Panc1 (cell line): ENCODE measurements at regions of chr18 and their contacts with region 1.

Region 1: DNA sequence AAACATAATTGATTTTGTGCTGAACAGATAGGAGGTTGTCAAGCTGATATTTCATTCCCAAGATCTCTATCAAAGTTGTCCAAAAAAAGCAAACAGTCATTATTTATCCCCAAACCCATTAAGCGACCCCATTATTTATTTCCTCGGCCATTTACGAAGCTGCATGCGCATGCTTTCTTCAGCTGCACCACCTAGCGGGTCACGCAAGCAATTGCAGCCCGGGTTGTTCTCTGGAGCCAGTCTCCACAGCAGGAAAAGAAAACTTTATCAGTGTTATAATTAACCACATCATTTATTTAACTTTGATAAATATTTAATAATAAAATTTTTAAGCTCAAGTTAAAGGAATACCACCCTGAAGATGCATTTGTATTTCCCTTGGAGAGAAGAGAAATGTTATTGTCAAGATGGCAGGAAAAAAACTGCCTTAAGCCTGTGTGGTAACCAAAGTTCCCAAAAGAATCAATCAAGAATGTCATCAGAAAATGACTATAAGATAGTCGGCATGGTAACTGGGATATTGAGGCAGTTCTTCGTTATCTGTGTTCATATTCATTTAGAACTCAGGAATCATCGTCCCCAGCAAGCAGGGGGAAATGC is 304.7 kb downstream of the FBXO15 start:
- DNase-seq: peak; percentile 22
- ATAC-seq: peak; percentile 72
- H3K4me3 ChIP-seq: no peak overlapping the region
- H3K27ac ChIP-seq: no peak overlapping the region
- H3K4me1 ChIP-seq: no peaks in the 10 kb centered on the region
- H3K27me3 ChIP-seq: peaks cover 12% of the 10 kb centered on the region
- CTCF ChIP-seq: peak; percentile 100

Region 2: GRCh38 chr18:72768681-72769229 is 1074.1 kb before region 1 on chr18:
- CTCF ChIA-PET with region 1: no interaction called
- POLR2A ChIA-PET with region 1: no interaction called
- in situ Hi-C with region 1: no loop called
- intact Hi-C with region 1: loop called (anchors 5 kb)
- DNase-seq: no peak
- ATAC-seq: no peak
- H3K4me3 ChIP-seq: no peak overlapping the region
- H3K27ac ChIP-seq: no peak overlapping the region
- H3K4me1 ChIP-seq: no peaks in the 10 kb centered on the region
- H3K27me3 ChIP-seq: no peaks in the 10 kb centered on the region
- CTCF ChIP-seq: no peak

Region 3: GRCh38 chr18:73316513-73316912 is 526.4 kb before region 1 on chr18:
- CTCF ChIA-PET with region 1: no interaction called
- POLR2A ChIA-PET with region 1: no interaction called
- in situ Hi-C with region 1: no loop called
- intact Hi-C with region 1: no loop called
- DNase-seq: no peak
- ATAC-seq: no peak
- H3K4me3 ChIP-seq: no peak overlapping the region
- H3K27ac ChIP-seq: no peak overlapping the region
- H3K4me1 ChIP-seq: no peaks in the 10 kb centered on the region
- H3K27me3 ChIP-seq: no peaks in the 10 kb centered on the region
- CTCF ChIP-seq: no peak